Testis (tissue), 5 donors: ENCODE measurements at regions of chr1 and their contacts with region 1.

Region 1: GRCh38 chr1:113605146-113605545 is 154.1 kb downstream of the PHTF1 start:
- DNase-seq: no peak
- H3K4me3 ChIP-seq: no peak overlapping the region
- H3K27ac ChIP-seq: no peak overlapping the region
- H3K4me1 ChIP-seq: no peaks in the 10 kb centered on the region
- H3K27me3 ChIP-seq: no peaks in the 10 kb centered on the region
- CTCF ChIP-seq: no peak
- POLR2A ChIP-seq: no peak

Region 2: DNA sequence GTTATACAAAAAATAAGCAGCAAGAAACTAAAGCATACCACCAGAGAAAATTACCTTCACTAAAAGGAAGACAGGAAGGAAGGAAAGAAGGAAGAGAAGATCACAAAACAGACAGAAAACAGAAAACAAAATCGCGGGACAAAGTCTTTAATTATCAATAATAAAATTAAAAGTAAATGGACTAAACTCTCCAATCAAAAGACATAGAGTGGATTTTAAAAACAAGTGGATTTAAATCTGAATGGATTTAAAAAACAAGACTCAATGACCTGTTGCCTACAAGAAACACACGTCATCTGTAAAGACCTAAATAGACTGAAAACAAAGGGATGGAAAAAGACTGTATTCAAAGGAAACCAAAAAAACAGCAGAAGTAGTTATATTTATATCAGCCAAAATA is 290.5 kb before region 1 on chr1:
- intact Hi-C with region 1: loop called (anchors 5 kb)
- DNase-seq: no peak
- H3K4me3 ChIP-seq: no peak overlapping the region
- H3K27ac ChIP-seq: no peak overlapping the region
- H3K4me1 ChIP-seq: no peaks in the 10 kb centered on the region
- H3K27me3 ChIP-seq: no peaks in the 10 kb centered on the region
- CTCF ChIP-seq: no peak
- POLR2A ChIP-seq: no peak

Region 3: DNA sequence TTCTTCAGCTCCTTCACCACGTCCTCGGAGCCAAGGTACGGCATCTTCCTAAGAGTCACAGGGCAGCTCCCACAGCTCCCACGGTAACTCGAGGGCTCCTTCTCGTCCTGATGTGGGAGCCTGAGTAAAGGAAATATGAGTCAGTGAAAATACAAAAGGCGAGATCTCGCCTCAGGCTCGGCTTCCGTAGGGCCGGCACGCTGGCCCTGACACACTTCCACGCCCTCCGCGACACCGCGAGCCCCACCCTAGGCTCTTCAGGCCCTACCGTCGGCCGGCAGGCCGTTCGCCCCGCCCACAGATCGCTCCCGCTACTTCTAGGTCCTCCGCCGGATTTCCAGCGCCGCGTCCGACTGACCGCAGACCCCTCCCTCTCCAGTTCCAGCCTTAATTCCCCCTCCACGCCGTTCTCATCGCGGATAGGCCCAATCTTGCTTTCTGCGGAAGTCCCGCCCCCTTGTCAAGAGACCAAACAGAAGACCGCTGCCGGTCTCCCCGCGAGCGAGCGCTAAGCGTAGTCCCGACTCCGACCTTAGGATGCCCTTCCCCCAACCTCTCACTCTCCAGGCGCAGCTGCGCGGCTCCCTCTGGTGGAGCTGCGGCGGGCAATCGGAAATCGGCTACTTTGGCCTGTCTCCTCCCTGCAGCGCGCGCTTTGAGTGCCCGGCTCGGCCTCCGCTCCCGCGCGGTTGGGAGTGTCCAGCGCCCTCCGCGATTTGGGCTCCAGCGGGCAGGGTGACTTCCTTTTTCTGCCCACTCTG is 299.7 kb after region 1 on chr1 and contains the starts of genes AP4B1 and DCLRE1B:
- intact Hi-C with region 1: no loop called
- DNase-seq: peak; percentile 99
- H3K4me3 ChIP-seq: peak within 1 kb of the TSS; percentile 77 to 82
- H3K27ac ChIP-seq: peak within 1 kb of the TSS; percentile 69 to 90
- H3K4me1 ChIP-seq: peaks cover 9% of the 10 kb centered on the region
- H3K27me3 ChIP-seq: no peaks in the 10 kb centered on the region
- CTCF ChIP-seq: peak; percentile 48 to 76 (median 67)
- POLR2A ChIP-seq: no peak
- total RNA-seq, gene AP4B1: 23.4 to 49.6 TPM
- total RNA-seq, gene DCLRE1B: 7.7 to 8.3 TPM